Transverse colon (tissue), 4 donors: ENCODE measurements at regions of chr12 and their contacts with region 1.

Region 1: GRCh38 chr12:76031537-76032073 is at the start of gene PHLDA1:
- DNase-seq: peak; percentile 91
- H3K4me3 ChIP-seq: peak within 1 kb of the TSS; percentile 55 to 91 (median 72)
- H3K27ac ChIP-seq: peak within 1 kb of the TSS; percentile 91 to 96 (median 92)
- H3K4me1 ChIP-seq: peaks cover 0 to 40% (median 12%) of the 10 kb centered on the region in 4 donors
- H3K27me3 ChIP-seq: peaks cover 14% of the 10 kb centered on the region
- CTCF ChIP-seq: peak; percentile 40 to 70 (median 52)
- EP300 ChIP-seq: no peak
- POLR2A ChIP-seq: peak; percentile 81
- total RNA-seq, gene PHLDA1: 4.2 to 8.4 (median 7.0) TPM

Region 2: GRCh38 chr12:75526655-75527511 is 504.7 kb before region 1 on chr12:
- in situ Hi-C with region 1: loop called in 3 of 4 experiments (anchors 5 to 25 kb)
- intact Hi-C with region 1: loop called (anchors 5 kb)
- DNase-seq: no peak
- H3K4me3 ChIP-seq: no peak overlapping the region
- H3K27ac ChIP-seq: no peak overlapping the region
- H3K4me1 ChIP-seq: no peaks in the 10 kb centered on the region
- H3K27me3 ChIP-seq: no peaks in the 10 kb centered on the region
- CTCF ChIP-seq: peak; percentile 55 to 68 (median 64)
- EP300 ChIP-seq: no peak
- POLR2A ChIP-seq: no peak

Region 3: GRCh38 chr12:75533239-75533638 is 498.4 kb before region 1 on chr12:
- in situ Hi-C with region 1: loop called in 3 of 4 experiments (anchors 5 to 25 kb)
- intact Hi-C with region 1: loop called (anchors 5 kb)
- DNase-seq: no peak
- H3K4me3 ChIP-seq: no peak overlapping the region
- H3K27ac ChIP-seq: no peak overlapping the region
- H3K4me1 ChIP-seq: no peaks in the 10 kb centered on the region
- H3K27me3 ChIP-seq: no peaks in the 10 kb centered on the region
- CTCF ChIP-seq: no peak
- EP300 ChIP-seq: no peak
- POLR2A ChIP-seq: no peak

Region 4: DNA sequence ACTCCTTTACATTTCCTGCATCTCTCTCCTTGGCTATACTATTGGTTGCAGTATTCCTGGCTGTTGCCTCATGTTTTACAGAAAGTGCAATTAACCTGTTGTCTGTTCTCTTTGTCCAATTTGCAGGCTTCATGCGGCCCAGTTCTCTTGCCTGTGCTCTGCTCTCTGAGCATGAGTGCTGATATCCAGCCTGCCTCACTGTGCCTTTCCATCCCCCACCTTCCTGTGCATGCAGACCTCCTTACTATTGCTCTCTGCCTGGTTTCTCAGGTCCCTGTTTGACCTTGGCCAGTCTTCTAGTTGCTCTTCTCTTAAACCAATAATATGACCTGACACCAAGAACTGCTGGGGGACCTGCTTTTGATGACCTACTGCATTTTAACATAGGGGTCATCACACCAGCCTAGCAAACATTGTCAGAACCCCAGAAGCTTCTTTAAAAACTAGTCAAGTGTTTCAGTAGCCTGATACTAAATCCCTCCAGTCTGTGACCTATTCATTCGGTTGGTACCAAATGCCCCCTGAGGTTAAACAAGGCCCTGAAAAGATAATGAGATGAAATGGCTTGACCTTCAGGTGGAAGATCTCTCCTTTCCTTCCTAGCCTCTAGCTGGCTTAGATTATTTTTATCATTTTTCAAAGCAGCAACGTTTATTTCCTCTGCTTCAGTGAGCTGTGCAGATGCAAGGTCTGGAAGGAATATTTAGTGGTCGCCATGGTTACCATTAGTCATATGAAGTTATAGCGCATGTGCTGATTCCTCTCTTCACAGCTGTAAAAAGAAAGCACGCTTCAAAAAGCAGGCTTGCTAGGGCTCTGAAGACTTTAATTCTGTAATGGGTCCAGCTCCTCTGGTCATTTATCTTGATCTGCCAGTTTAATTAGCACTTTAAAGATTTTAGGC is 216.5 kb before region 1 on chr12:
- in situ Hi-C with region 1: loop called in 1 of 4 experiments (anchors 10 kb)
- intact Hi-C with region 1: no loop called
- DNase-seq: no peak
- H3K4me3 ChIP-seq: no peak overlapping the region
- H3K27ac ChIP-seq: peak overlapping the region; percentile 49 to 72 (median 56)
- H3K4me1 ChIP-seq: peaks cover 0 to 15% (median 3%) of the 10 kb centered on the region in 4 donors
- H3K27me3 ChIP-seq: no peaks in the 10 kb centered on the region
- CTCF ChIP-seq: no peak
- EP300 ChIP-seq: no peak
- POLR2A ChIP-seq: no peak

Region 5: GRCh38 chr12:76074701-76075336 is 43.2 kb after region 1 on chr12:
- in situ Hi-C with region 1: no loop called
- intact Hi-C with region 1: no loop called
- DNase-seq: no peak
- H3K4me3 ChIP-seq: no peak overlapping the region
- H3K27ac ChIP-seq: no peak overlapping the region
- H3K4me1 ChIP-seq: peaks cover 0 to 4% (median 0%) of the 10 kb centered on the region in 4 donors
- H3K27me3 ChIP-seq: no peaks in the 10 kb centered on the region
- CTCF ChIP-seq: no peak
- EP300 ChIP-seq: no peak
- POLR2A ChIP-seq: no peak